Right lobe of liver (tissue), 6 donors: ENCODE measurements at regions of chr17 and their contacts with region 1.

Region 1: GRCh38 chr17:77096570-77097214 is 44.1 kb upstream of the SEC14L1 start:
- DNase-seq: no peak
- ATAC-seq: peak in 3 of 4 donors; percentile 20 to 44 (median 26)
- H3K4me3 ChIP-seq: no peak overlapping the region
- H3K27ac ChIP-seq: peak overlapping the region in 2 of 3 donors; percentile 51 to 61
- H3K4me1 ChIP-seq: peaks cover 0 to 23% (median 8%) of the 10 kb centered on the region in 4 donors
- H3K27me3 ChIP-seq: no peaks in the 10 kb centered on the region
- CTCF ChIP-seq: peak; percentile 49 to 71 (median 60)
- POLR2A ChIP-seq: no peak

Region 2: DNA sequence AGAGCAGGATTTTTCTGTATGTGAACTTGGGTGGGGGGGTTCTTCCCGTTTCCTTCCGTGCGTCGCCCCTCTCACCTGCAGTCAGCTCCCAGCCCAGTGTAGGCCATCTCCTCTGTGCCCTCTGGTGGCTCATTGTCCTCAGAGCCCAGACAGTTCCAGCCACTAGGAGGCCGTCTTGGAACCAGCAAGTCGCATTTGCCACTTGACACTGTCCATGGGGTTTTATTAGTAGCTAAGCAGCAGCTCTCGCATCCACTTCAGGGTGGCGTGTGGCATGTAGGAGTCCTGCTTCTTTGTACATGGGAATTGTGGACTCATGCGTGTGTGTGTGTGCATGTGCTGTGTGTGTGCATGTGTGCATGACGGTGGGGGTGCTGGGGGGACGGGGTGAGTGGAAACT is 118.1 kb after region 1 on chr17:
- intact Hi-C with region 1: loop called in 1 of 2 experiments (anchors 10 kb)
- DNase-seq: no peak
- ATAC-seq: peak; percentile 47 to 62 (median 60)
- H3K4me3 ChIP-seq: no peak overlapping the region
- H3K27ac ChIP-seq: no peak overlapping the region
- H3K4me1 ChIP-seq: no peaks in the 10 kb centered on the region
- H3K27me3 ChIP-seq: no peaks in the 10 kb centered on the region
- CTCF ChIP-seq: peak; percentile 34 to 41 (median 39)
- POLR2A ChIP-seq: no peak

Region 3: GRCh38 chr17:77256710-77257109 is 160.0 kb after region 1 on chr17:
- intact Hi-C with region 1: no loop called
- DNase-seq: no peak
- ATAC-seq: no peak
- H3K4me3 ChIP-seq: no peak overlapping the region
- H3K27ac ChIP-seq: no peak overlapping the region
- H3K4me1 ChIP-seq: no peaks in the 10 kb centered on the region
- H3K27me3 ChIP-seq: no peaks in the 10 kb centered on the region
- CTCF ChIP-seq: no peak
- POLR2A ChIP-seq: no peak